ENCODE measurements at regions of chr19 and their contacts with region 1.

Region 1: DNA sequence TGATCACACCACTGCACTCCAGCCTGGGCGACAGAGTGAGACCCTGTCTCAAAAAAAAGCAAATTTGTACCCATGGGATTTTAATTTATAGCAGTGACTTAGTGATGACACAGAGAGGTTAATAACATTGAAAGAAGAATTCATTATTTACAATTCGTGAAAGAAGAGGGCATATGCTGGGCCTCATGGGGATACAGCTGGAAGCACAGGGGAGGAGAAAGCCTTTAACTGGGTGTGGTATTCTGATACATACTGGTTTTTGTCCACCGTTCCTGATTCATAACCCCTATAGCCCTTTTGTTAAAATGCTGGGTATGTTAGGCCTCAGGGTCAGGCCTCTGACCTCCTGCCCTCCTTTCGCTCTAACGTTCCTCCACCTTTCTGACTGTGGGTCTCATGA is 10.9 kb downstream of the ZNF264 start:
- DNase-seq: no peak
- H3K4me3 ChIP-seq: no peak overlapping the region
- H3K27ac ChIP-seq: no peak overlapping the region
- H3K4me1 ChIP-seq: no peaks in the 10 kb centered on the region
- H3K27me3 ChIP-seq: no peaks in the 10 kb centered on the region
- CTCF ChIP-seq: no peak

Region 2: DNA sequence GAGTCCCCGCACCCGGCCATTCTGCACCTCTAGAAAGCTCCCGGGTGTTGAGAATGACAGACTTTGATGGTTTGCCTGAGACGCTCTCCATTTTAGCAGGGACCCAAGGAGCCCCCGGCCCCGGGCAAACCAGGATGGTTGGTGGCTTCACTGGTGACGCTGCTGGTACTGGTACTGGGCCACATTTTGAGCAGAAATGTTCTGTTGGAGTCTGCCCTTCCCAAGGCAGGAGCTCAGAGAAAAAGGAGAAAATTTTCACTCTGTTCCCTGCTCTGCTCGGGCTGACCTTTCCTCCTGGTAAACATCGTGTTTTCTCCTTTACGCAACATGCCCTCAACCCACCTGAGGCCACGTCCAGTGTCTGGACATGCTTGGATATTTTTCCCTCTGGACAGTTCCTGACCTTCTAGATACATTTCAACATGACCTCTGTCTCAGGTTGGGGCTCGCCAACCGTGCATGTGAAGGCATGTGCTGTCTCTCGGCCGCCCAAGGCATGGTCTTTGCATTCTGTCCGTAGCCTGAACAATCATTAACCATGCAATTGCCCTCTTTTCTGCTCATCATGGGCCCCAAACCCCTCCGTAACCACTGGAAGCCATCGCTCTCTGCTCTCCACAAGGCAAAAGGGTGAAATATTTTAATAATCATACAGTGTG is 246.5 kb before region 1 on chr19:
- CTCF ChIA-PET with region 1: no interaction called
- POLR2A ChIA-PET with region 1: no interaction called
- intact Hi-C with region 1: no loop called
- DNase-seq: no peak
- H3K4me3 ChIP-seq: no peak overlapping the region
- H3K27ac ChIP-seq: no peak overlapping the region
- H3K4me1 ChIP-seq: no peaks in the 10 kb centered on the region
- H3K27me3 ChIP-seq: peaks cover 63% of the 10 kb centered on the region
- CTCF ChIP-seq: no peak

Region 3: DNA sequence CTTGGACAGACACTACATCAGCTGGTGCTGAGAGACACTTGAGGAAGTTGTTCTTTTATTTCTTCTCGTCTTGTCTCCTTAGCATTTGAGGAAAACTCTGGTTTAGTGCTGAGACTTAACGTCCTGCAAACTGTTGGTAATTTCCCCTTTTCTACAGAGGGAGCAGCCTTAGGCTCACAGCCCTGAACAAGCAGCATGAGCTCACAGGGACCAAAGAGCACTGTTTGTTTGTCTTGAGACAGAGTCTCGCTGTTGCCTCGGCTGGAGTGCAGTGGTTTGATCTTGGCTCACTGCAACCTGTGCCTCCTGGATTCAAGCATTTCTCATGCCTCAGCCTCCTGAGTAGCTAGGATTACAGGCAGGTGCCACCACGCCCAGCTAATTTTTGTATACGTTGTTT is 43.8 kb after region 1 on chr19:
- CTCF ChIA-PET with region 1: no interaction called
- POLR2A ChIA-PET with region 1: no interaction called
- intact Hi-C with region 1: no loop called
- DNase-seq: peak in 1 of 2 experiments; percentile 15
- H3K4me3 ChIP-seq: no peak overlapping the region
- H3K27ac ChIP-seq: no peak overlapping the region
- H3K4me1 ChIP-seq: peaks cover 12% of the 10 kb centered on the region; the same call in 1 of the 2 replicates
- H3K27me3 ChIP-seq: no peaks in the 10 kb centered on the region
- CTCF ChIP-seq: no peak

Region 4: GRCh38 chr19:57664269-57665127 is 462.3 kb after region 1 on chr19:
- CTCF ChIA-PET with region 1: no interaction called
- POLR2A ChIA-PET with region 1: interaction called, 35 read pairs
- intact Hi-C with region 1: no loop called
- DNase-seq: peak; percentile 38 to 49
- H3K4me3 ChIP-seq: peak overlapping the region; percentile 70
- H3K27ac ChIP-seq: no peak overlapping the region
- H3K4me1 ChIP-seq: peaks cover 7% of the 10 kb centered on the region
- H3K27me3 ChIP-seq: peaks cover 46% of the 10 kb centered on the region
- CTCF ChIP-seq: no peak

Measured in PC-9 (cell line).